B cell (primary cell): ENCODE measurements at regions of chr4 and their contacts with region 1.

Region 1: GRCh38 chr4:78864405-78865024 is 74.7 kb downstream of the PAQR3 start:
- DNase-seq: peak; percentile 84
- ATAC-seq: peak; percentile 73
- H3K4me3 ChIP-seq: no peak overlapping the region
- H3K4me3 Mint-ChIP-seq: peak overlapping the region; percentile 8
- H3K27ac ChIP-seq: no peak overlapping the region
- H3K27ac Mint-ChIP-seq: peak overlapping the region; percentile 46
- H3K4me1 ChIP-seq: peaks cover 6 to 7% of the 10 kb centered on the region in 2 donors
- H3K4me1 Mint-ChIP-seq: peaks cover 17% of the 10 kb centered on the region
- H3K27me3 ChIP-seq: no peaks in the 10 kb centered on the region
- H3K27me3 Mint-ChIP-seq: no peaks in the 10 kb centered on the region
- CTCF ChIP-seq: peak; percentile 84

Region 2: GRCh38 chr4:77959566-77960338 is 904.8 kb before region 1 on chr4:
- CTCF ChIA-PET with region 1: interaction called, 4 read pairs
- POLR2A ChIA-PET with region 1: no interaction called
- intact Hi-C with region 1: loop called (anchors 1 kb)
- DNase-seq: peak; percentile 57
- ATAC-seq: no peak
- H3K4me3 ChIP-seq: no peak overlapping the region
- H3K4me3 Mint-ChIP-seq: no peak overlapping the region
- H3K27ac ChIP-seq: no peak overlapping the region
- H3K27ac Mint-ChIP-seq: no peak overlapping the region
- H3K4me1 ChIP-seq: no peaks in the 10 kb centered on the region
- H3K4me1 Mint-ChIP-seq: no peaks in the 10 kb centered on the region
- H3K27me3 ChIP-seq: no peaks in the 10 kb centered on the region
- H3K27me3 Mint-ChIP-seq: no peaks in the 10 kb centered on the region
- CTCF ChIP-seq: peak; percentile 80

Region 3: GRCh38 chr4:78599931-78600375 is 264.6 kb before region 1 on chr4:
- CTCF ChIA-PET with region 1: interaction called, 12 read pairs
- POLR2A ChIA-PET with region 1: no interaction called
- intact Hi-C with region 1: no loop called
- DNase-seq: no peak
- ATAC-seq: no peak
- H3K4me3 ChIP-seq: no peak overlapping the region
- H3K4me3 Mint-ChIP-seq: no peak overlapping the region
- H3K27ac ChIP-seq: no peak overlapping the region
- H3K27ac Mint-ChIP-seq: no peak overlapping the region
- H3K4me1 ChIP-seq: no peaks in the 10 kb centered on the region
- H3K4me1 Mint-ChIP-seq: peaks cover 3% of the 10 kb centered on the region
- H3K27me3 ChIP-seq: no peaks in the 10 kb centered on the region
- H3K27me3 Mint-ChIP-seq: peaks cover 3% of the 10 kb centered on the region
- CTCF ChIP-seq: no peak

Region 4: DNA sequence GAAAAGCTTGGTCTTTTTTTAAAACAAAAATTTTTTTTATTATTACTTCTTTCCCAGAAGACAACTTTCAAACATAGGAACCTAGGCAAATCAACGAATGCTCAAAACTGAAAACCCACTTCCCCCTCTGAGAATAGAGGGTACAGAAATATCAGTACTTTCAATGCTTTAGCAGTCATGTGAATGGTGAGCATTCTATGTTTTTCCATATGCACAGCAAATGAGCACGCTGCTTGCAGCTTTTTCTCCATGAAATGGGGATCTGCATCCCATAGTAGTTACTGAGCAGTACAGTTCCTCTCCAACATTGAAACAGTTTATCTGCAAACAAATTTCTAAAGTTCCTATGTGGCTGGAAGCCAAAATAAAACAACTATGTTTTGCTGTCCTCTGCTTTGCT is 196.8 kb before region 1 on chr4:
- CTCF ChIA-PET with region 1: interaction called, 7 read pairs
- POLR2A ChIA-PET with region 1: no interaction called
- intact Hi-C with region 1: loop called (anchors 5 kb)
- DNase-seq: peak; percentile 47
- ATAC-seq: peak; percentile 62
- H3K4me3 ChIP-seq: peak overlapping the region in 2 of 5 experiments; percentile 26 to 28
- H3K4me3 Mint-ChIP-seq: peak overlapping the region; percentile 80
- H3K27ac ChIP-seq: peak overlapping the region; percentile 50 to 73
- H3K27ac Mint-ChIP-seq: peak overlapping the region; percentile 85
- H3K4me1 ChIP-seq: peaks cover 75 to 78% of the 10 kb centered on the region in 2 donors
- H3K4me1 Mint-ChIP-seq: peaks cover 88% of the 10 kb centered on the region
- H3K27me3 ChIP-seq: no peaks in the 10 kb centered on the region
- H3K27me3 Mint-ChIP-seq: no peaks in the 10 kb centered on the region
- CTCF ChIP-seq: no peak

Region 5: DNA sequence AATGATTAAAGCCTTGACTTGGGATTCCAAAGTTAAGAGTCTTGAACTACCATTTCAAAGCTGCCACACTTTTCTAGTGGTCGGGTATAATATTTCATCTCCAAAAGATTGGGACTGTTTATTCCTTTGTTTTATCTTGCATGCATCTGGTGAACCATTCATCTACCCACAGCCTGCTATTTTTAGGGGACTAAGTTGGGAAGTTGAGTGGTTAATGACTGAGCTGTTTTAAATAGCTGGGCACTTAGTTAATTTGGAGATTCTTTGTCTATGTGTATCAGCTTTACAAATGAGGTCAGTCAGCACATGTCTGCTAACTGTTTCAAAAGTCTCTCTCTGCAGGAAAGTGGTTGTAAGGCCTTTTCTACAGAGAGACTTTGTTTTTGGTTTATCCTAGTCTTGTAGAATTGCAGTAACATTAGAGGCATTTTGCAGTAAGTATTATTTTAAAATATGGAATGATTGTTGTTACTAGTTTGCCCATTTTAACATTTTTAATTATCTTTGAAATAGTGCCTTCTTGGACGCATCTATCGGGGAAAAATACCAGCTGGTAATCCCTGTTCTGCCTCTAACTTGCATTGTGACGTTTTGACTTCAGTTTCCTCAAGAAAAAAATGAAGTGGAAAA is 80.2 kb before region 1 on chr4:
- CTCF ChIA-PET with region 1: interaction called, 13 read pairs
- POLR2A ChIA-PET with region 1: no interaction called
- intact Hi-C with region 1: loop called (anchors 5 kb)
- DNase-seq: no peak
- ATAC-seq: no peak
- H3K4me3 ChIP-seq: no peak overlapping the region
- H3K4me3 Mint-ChIP-seq: no peak overlapping the region
- H3K27ac ChIP-seq: peak overlapping the region in 1 of 2 donors; percentile 30
- H3K27ac Mint-ChIP-seq: peak overlapping the region; percentile 22
- H3K4me1 ChIP-seq: peaks cover 60 to 83% of the 10 kb centered on the region in 2 donors
- H3K4me1 Mint-ChIP-seq: peaks cover 45% of the 10 kb centered on the region
- H3K27me3 ChIP-seq: no peaks in the 10 kb centered on the region
- H3K27me3 Mint-ChIP-seq: no peaks in the 10 kb centered on the region
- CTCF ChIP-seq: no peak

Region 6: GRCh38 chr4:78845472-78845871 is 19.0 kb before region 1 on chr4:
- CTCF ChIA-PET with region 1: interaction called, 9 read pairs
- POLR2A ChIA-PET with region 1: no interaction called
- intact Hi-C with region 1: loop called (anchors 2 kb)
- DNase-seq: peak; percentile 20
- ATAC-seq: peak; percentile 31
- H3K4me3 ChIP-seq: no peak overlapping the region
- H3K4me3 Mint-ChIP-seq: no peak overlapping the region
- H3K27ac ChIP-seq: peak overlapping the region in 1 of 2 donors; percentile 65
- H3K27ac Mint-ChIP-seq: peak overlapping the region; percentile 41
- H3K4me1 ChIP-seq: peaks cover 0 to 17% of the 10 kb centered on the region in 2 donors
- H3K4me1 Mint-ChIP-seq: peaks cover 31% of the 10 kb centered on the region
- H3K27me3 ChIP-seq: no peaks in the 10 kb centered on the region
- H3K27me3 Mint-ChIP-seq: no peaks in the 10 kb centered on the region
- CTCF ChIP-seq: no peak